CD4-positive, alpha-beta memory T cell (primary cell): ENCODE measurements at regions of chr15 and their contacts with region 1.

Region 1: GRCh38 chr15:64010719-64011118 is 35.6 kb downstream of the DAPK2 start:
- DNase-seq: peak; percentile 89 to 98 (median 93)
- H3K4me3 ChIP-seq: no peak overlapping the region
- H3K4me3 Mint-ChIP-seq: peak overlapping the region in 7 of 8 donors; percentile 74 to 89 (median 79)
- H3K27ac ChIP-seq: peak overlapping the region; percentile 64
- H3K27ac Mint-ChIP-seq: peak overlapping the region; percentile 91 to 100 (median 99)
- H3K4me1 ChIP-seq: peaks cover 47% of the 10 kb centered on the region
- H3K4me1 Mint-ChIP-seq: peaks cover 32 to 49% (median 40%) of the 10 kb centered on the region in 4 donors
- H3K27me3 ChIP-seq: no peaks in the 10 kb centered on the region
- H3K27me3 Mint-ChIP-seq: no peaks in the 10 kb centered on the region

Region 2: DNA sequence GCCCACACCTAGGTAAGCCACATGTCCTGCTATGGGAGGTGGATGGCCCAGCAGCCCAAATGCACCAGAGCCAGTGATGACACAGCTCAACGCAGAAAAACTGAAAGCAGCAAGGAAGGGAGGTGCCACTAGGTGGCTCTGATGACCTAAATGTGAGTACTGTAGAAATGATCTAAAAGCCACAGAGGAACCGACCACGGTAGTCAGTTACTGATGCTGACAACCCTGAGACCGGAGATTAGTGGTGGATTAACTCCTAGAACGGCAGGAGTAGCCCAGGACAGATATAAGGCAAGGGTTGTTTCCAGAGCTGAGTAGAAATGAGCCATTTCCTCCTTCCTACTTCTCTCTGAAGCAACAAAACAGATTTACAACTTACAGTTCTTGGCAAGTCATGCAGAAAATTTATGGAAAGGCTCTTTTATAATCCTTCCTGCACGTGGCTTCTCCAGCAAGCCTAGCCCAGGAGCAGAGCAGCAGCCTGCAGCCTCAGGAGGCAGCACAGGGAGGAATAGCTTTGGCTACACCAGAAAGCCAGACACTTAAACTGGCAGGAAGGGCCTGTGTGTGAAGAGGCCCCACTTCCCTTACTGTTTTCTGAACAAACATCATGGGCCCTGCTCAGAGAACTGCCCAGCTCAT is 400.4 kb before region 1 on chr15:
- CTCF ChIA-PET with region 1: interaction called, 8 read pairs
- POLR2A ChIA-PET with region 1: interaction called, 6 read pairs
- intact Hi-C with region 1: loop called (anchors 2 kb)
- DNase-seq: peak; percentile 68 to 85 (median 75)
- H3K4me3 ChIP-seq: no peak overlapping the region
- H3K4me3 Mint-ChIP-seq: peak overlapping the region; percentile 3 to 60 (median 34)
- H3K27ac ChIP-seq: peak overlapping the region; percentile 33
- H3K27ac Mint-ChIP-seq: peak overlapping the region; percentile 27 to 97 (median 93)
- H3K4me1 ChIP-seq: peaks cover 33% of the 10 kb centered on the region
- H3K4me1 Mint-ChIP-seq: peaks cover 27 to 47% (median 39%) of the 10 kb centered on the region in 4 donors
- H3K27me3 ChIP-seq: no peaks in the 10 kb centered on the region
- H3K27me3 Mint-ChIP-seq: no peaks in the 10 kb centered on the region

Region 3: GRCh38 chr15:63626955-63627354 is 383.8 kb before region 1 on chr15:
- CTCF ChIA-PET with region 1: no interaction called
- POLR2A ChIA-PET with region 1: no interaction called
- intact Hi-C with region 1: no loop called
- DNase-seq: no peak
- H3K4me3 ChIP-seq: no peak overlapping the region
- H3K4me3 Mint-ChIP-seq: no peak overlapping the region
- H3K27ac ChIP-seq: no peak overlapping the region
- H3K27ac Mint-ChIP-seq: peak overlapping the region in 1 of 7 donors; percentile 2
- H3K4me1 ChIP-seq: no peaks in the 10 kb centered on the region
- H3K4me1 Mint-ChIP-seq: no peaks in the 10 kb centered on the region
- H3K27me3 ChIP-seq: no peaks in the 10 kb centered on the region
- H3K27me3 Mint-ChIP-seq: no peaks in the 10 kb centered on the region

Region 4: GRCh38 chr15:63833021-63833696 is 177.6 kb before region 1 on chr15:
- CTCF ChIA-PET with region 1: interaction called, 32 read pairs
- POLR2A ChIA-PET with region 1: interaction called, 37 read pairs
- intact Hi-C with region 1: no loop called
- DNase-seq: peak in 4 of 5 donors; percentile 40 to 53 (median 46)
- H3K4me3 ChIP-seq: peak overlapping the region; percentile 53 to 69
- H3K4me3 Mint-ChIP-seq: peak overlapping the region; percentile 94 to 98 (median 96)
- H3K27ac ChIP-seq: peak overlapping the region; percentile 94
- H3K27ac Mint-ChIP-seq: peak overlapping the region; percentile 95 to 100 (median 97)
- H3K4me1 ChIP-seq: peaks cover 56% of the 10 kb centered on the region
- H3K4me1 Mint-ChIP-seq: peaks cover 39 to 62% (median 48%) of the 10 kb centered on the region in 4 donors
- H3K27me3 ChIP-seq: no peaks in the 10 kb centered on the region
- H3K27me3 Mint-ChIP-seq: no peaks in the 10 kb centered on the region

Region 5: DNA sequence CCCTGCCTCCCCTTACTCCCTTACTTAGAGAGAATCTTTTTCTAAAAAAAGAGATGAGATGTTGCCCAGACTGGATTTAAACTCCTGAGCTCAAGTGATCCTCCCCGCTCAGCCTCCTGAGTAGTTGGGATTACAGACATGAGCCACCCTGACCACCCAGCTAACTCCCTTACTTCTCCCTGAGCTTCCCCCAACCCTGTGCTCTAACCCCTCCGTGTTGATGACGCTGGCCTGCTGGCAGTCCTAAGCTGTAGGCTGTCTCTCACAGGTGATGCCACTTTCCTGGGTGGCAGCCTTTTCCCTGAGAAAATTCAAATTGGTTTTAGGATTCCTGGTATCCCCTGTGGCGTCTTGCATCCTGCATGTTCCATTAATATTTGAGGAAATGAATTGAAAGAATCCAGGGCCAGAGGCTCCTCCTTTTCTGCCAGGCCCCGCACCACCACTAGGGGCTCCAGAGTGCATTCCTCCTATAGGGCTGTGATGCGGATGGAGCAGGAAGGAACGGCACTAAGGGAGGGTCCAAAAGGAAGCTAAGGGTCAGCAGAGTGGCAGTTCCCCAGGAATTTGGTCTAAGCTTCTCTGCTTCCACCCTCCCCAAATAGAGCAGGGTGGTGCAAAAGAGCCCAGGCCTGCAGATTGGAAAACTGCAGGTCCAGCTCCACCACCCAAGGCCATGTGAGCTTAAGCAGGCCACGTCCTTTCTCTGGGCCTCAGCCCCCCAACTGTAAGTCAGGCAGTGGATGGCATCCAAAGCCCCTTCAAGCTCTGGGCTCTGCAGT is 65.5 kb before region 1 on chr15:
- CTCF ChIA-PET with region 1: interaction called, 154 read pairs
- POLR2A ChIA-PET with region 1: interaction called, 28 read pairs
- intact Hi-C with region 1: loop called (anchors 1 kb)
- DNase-seq: peak; percentile 50 to 66 (median 56)
- H3K4me3 ChIP-seq: no peak overlapping the region
- H3K4me3 Mint-ChIP-seq: peak overlapping the region in 3 of 8 donors; percentile 4 to 57 (median 14)
- H3K27ac ChIP-seq: no peak overlapping the region
- H3K27ac Mint-ChIP-seq: peak overlapping the region in 5 of 7 donors; percentile 30 to 85 (median 61)
- H3K4me1 ChIP-seq: peaks cover 9% of the 10 kb centered on the region
- H3K4me1 Mint-ChIP-seq: peaks cover 6 to 20% (median 10%) of the 10 kb centered on the region in 4 donors
- H3K27me3 ChIP-seq: no peaks in the 10 kb centered on the region
- H3K27me3 Mint-ChIP-seq: no peaks in the 10 kb centered on the region

Region 6: DNA sequence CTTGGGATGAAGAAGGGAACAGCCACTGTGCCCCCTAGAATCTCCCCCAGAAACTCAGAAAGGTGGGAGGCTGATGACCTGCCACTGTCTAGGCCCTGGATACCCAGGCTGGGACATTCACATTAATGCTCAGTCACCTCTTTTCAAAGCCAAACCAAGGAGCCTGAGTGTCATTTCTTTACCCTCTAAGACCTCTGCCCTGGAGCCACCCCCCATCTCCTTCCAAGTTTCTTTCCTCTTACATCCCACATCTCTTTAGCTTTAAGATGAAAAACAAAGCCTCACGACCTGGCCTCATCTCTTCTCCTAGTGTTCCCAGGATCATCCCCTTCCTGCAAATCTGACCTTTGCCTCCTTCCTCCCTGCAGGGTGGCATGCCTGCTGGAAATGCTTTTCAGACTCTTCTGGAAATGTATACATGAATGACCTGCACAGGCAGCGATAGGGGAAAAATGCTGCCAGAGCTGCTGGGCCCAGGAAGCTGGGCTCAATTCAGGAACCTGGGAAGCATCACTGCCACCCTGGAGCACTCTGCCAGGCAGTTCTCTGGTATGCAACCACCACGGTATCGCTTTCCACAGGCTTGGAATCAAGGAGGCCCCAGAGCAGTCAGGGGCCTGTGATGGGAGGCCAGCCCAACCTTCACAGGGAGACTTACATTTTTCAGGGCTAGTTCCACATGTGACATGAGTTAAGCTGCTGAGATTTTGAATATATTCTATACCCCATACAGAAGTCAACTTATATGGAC is 32.0 kb before region 1 on chr15:
- CTCF ChIA-PET with region 1: interaction called, 4 read pairs
- POLR2A ChIA-PET with region 1: interaction called, 14 read pairs
- intact Hi-C with region 1: no loop called
- DNase-seq: no peak
- H3K4me3 ChIP-seq: no peak overlapping the region
- H3K4me3 Mint-ChIP-seq: no peak overlapping the region
- H3K27ac ChIP-seq: no peak overlapping the region
- H3K27ac Mint-ChIP-seq: peak overlapping the region in 1 of 7 donors; percentile 37
- H3K4me1 ChIP-seq: no peaks in the 10 kb centered on the region
- H3K4me1 Mint-ChIP-seq: no peaks in the 10 kb centered on the region
- H3K27me3 ChIP-seq: no peaks in the 10 kb centered on the region
- H3K27me3 Mint-ChIP-seq: peaks cover 0 to 1% of the 10 kb centered on the region in 2 donors

Region 7: GRCh38 chr15:64035525-64035924 is 24.8 kb after region 1 on chr15:
- CTCF ChIA-PET with region 1: no interaction called
- POLR2A ChIA-PET with region 1: no interaction called
- intact Hi-C with region 1: no loop called
- DNase-seq: no peak
- H3K4me3 ChIP-seq: no peak overlapping the region
- H3K4me3 Mint-ChIP-seq: no peak overlapping the region
- H3K27ac ChIP-seq: no peak overlapping the region
- H3K27ac Mint-ChIP-seq: peak overlapping the region in 1 of 7 donors; percentile 16
- H3K4me1 ChIP-seq: no peaks in the 10 kb centered on the region
- H3K4me1 Mint-ChIP-seq: peaks cover 2 to 8% (median 5%) of the 10 kb centered on the region in 4 donors
- H3K27me3 ChIP-seq: no peaks in the 10 kb centered on the region
- H3K27me3 Mint-ChIP-seq: no peaks in the 10 kb centered on the region

Region 8: GRCh38 chr15:64093627-64094417 is 83.1 kb after region 1 on chr15 and contains the start of gene CIAO2A:
- CTCF ChIA-PET with region 1: interaction called, 4 read pairs
- POLR2A ChIA-PET with region 1: interaction called, 11 read pairs
- intact Hi-C with region 1: no loop called
- DNase-seq: peak; percentile 86 to 96 (median 90)
- H3K4me3 ChIP-seq: peak within 1 kb of the TSS; percentile 87 to 98
- H3K4me3 Mint-ChIP-seq: peak within 1 kb of the TSS; percentile 92 to 99 (median 98)
- H3K27ac ChIP-seq: peak within 1 kb of the TSS; percentile 85
- H3K27ac Mint-ChIP-seq: peak within 1 kb of the TSS; percentile 90 to 100 (median 98)
- H3K4me1 ChIP-seq: peaks cover 65% of the 10 kb centered on the region
- H3K4me1 Mint-ChIP-seq: peaks cover 55 to 86% (median 69%) of the 10 kb centered on the region in 4 donors
- H3K27me3 ChIP-seq: no peaks in the 10 kb centered on the region
- H3K27me3 Mint-ChIP-seq: no peaks in the 10 kb centered on the region
- total RNA-seq, gene CIAO2A: 35.0 to 36.4 TPM